WTC11 (cell line): ENCODE measurements at regions of chr14 and their contacts with region 1.

Region 1: GRCh38 chr14:104341532-104342434 is 203.4 kb downstream of the KIF26A start:
- DNase-seq: peak; percentile 86
- ATAC-seq: peak; percentile 92
- H3K4me3 Mint-ChIP-seq: peak overlapping the region; percentile 39
- H3K27ac Mint-ChIP-seq: no peak overlapping the region
- H3K4me1 Mint-ChIP-seq: peaks cover 9% of the 10 kb centered on the region
- H3K27me3 Mint-ChIP-seq: peaks cover 23% of the 10 kb centered on the region
- CTCF ChIP-seq: peak; percentile 76

Region 2: GRCh38 chr14:104293851-104294627 is 47.7 kb before region 1 on chr14:
- CTCF ChIA-PET with region 1: interaction called, 10 read pairs
- POLR2A ChIA-PET with region 1: no interaction called
- DNase-seq: peak; percentile 39
- ATAC-seq: no peak
- H3K4me3 Mint-ChIP-seq: no peak overlapping the region
- H3K27ac Mint-ChIP-seq: no peak overlapping the region
- H3K4me1 Mint-ChIP-seq: peaks cover 48% of the 10 kb centered on the region
- H3K27me3 Mint-ChIP-seq: no peaks in the 10 kb centered on the region; the same call in 1 of the 2 replicates
- CTCF ChIP-seq: no peak

Region 3: GRCh38 chr14:104353921-104354701 is 12.3 kb after region 1 on chr14:
- CTCF ChIA-PET with region 1: interaction called, 22 read pairs
- POLR2A ChIA-PET with region 1: no interaction called
- DNase-seq: no peak
- ATAC-seq: no peak
- H3K4me3 Mint-ChIP-seq: no peak overlapping the region
- H3K27ac Mint-ChIP-seq: no peak overlapping the region
- H3K4me1 Mint-ChIP-seq: no peaks in the 10 kb centered on the region
- H3K27me3 Mint-ChIP-seq: no peaks in the 10 kb centered on the region
- CTCF ChIP-seq: no peak